Mammary epithelial cell (primary cell): ENCODE measurements at regions of chr19 and their contacts with region 1.

Region 1: GRCh38 chr19:2061495-2062381 is 10.7 kb upstream of the MKNK2 start:
- DNase-seq: peak; percentile 97
- H3K4me3 ChIP-seq: peak overlapping the region; percentile 54 to 70 (median 62)
- H3K27ac ChIP-seq: peak overlapping the region; percentile 88
- H3K4me1 ChIP-seq: peaks cover 59% of the 10 kb centered on the region
- H3K27me3 ChIP-seq: no peaks in the 10 kb centered on the region
- CTCF ChIP-seq: no peak

Region 2: GRCh38 chr19:1929021-1929742 is 132.6 kb before region 1 on chr19:
- CTCF ChIA-PET with region 1: no interaction called
- dilution Hi-C with region 1: loop called (anchors 10 kb)
- in situ Hi-C with region 1: no loop called
- intact Hi-C with region 1: no loop called
- DNase-seq: peak; percentile 58
- H3K4me3 ChIP-seq: peak overlapping the region; percentile 16 to 43 (median 35)
- H3K27ac ChIP-seq: no peak overlapping the region
- H3K4me1 ChIP-seq: peaks cover 6% of the 10 kb centered on the region
- H3K27me3 ChIP-seq: no peaks in the 10 kb centered on the region
- CTCF ChIP-seq: peak; percentile 76 to 84

Region 3: DNA sequence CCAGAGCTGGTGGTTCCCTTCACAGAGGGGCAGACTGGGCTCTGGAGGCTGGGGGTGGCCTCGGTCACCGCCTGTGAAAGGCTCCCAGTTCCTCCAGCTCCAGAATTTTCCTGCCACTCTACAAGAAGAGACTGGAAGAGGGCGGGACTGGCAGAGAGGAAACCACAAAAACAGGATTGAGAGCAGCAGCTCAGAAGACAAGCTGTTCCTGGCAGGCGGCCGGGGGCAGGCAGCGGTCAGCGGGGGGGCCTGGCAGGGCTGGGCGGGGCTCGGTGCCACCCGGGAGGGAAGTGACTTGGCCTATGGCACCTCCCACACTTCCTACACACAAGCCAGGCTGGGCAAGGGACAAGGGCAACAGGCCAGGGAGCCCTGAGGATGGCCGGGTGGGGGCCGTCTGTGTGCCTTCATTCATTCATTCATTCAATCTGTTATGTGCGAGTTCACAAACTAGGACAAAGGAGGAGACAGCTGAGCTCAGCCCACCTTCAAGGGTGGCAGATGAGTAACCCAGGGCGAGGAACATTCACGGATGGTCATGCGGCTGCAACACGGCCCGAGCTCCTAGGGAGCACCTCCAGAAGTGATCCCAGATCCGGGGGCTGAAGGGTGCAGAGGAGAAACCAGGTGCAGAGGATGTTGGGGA is 29.3 kb before region 1 on chr19:
- CTCF ChIA-PET with region 1: no interaction called
- dilution Hi-C with region 1: no loop called
- in situ Hi-C with region 1: no loop called
- intact Hi-C with region 1: loop called (anchors 2 kb)
- DNase-seq: peak; percentile 95
- H3K4me3 ChIP-seq: peak overlapping the region in 2 of 3 experiments; percentile 19 to 39
- H3K27ac ChIP-seq: peak overlapping the region; percentile 80
- H3K4me1 ChIP-seq: peaks cover 31% of the 10 kb centered on the region
- H3K27me3 ChIP-seq: no peaks in the 10 kb centered on the region
- CTCF ChIP-seq: no peak

Region 4: DNA sequence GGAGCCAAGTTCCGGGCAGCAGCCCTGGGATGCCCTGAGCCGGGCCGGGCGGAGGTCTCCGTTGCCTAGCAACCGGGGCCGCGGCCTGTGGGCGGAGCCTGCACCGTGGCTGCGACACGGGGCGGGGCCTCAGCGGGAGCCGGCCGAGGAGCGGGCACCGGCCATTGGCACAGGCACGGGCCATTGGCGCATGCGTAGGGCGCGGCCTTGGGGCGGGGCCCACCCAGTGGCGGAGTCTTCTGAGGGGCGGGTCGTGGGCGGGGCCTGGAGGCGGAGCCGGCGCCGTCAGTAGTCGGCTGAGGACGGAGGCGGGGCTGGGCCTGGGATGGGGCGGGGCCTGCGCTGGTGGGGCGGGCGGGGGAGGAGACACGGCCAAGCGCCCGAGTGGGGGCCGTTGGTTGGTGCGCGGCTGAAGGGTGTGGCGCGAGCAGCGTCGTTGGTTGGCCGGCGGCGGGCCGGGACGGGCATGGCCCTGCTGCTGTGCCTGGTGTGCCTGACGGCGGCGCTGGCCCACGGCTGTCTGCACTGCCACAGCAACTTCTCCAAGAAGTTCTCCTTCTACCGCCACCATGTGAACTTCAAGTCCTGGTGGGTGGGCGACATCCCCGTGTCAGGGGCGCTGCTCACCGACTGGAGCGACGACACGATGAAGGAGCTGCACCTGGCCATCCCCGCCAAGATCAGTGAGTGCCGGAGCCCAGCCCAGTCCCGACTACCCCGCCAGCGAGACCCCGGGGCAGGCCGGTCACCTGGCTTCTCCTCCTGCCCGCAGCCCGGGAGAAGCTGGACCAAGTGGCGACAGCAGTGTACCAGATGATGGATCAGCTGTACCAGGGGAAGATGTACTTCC is 35.0 kb after region 1 on chr19 and contains the start of gene IZUMO4:
- CTCF ChIA-PET with region 1: no interaction called
- dilution Hi-C with region 1: no loop called
- in situ Hi-C with region 1: no loop called
- intact Hi-C with region 1: loop called (anchors 2 kb)
- DNase-seq: peak; percentile 95
- H3K4me3 ChIP-seq: peak within 1 kb of the TSS; percentile 85 to 96 (median 86)
- H3K27ac ChIP-seq: peak within 1 kb of the TSS; percentile 82
- H3K4me1 ChIP-seq: peaks cover 37% of the 10 kb centered on the region
- H3K27me3 ChIP-seq: no peaks in the 10 kb centered on the region
- CTCF ChIP-seq: peak; percentile 13 to 55
- total RNA-seq, gene IZUMO4: 1.2 to 11.2 TPM